Heart left ventricle (tissue), 16 donors: ENCODE measurements at regions of chr17 and their contacts with region 1.

Region 1: GRCh38 chr17:9361188-9361955 is 214.2 kb downstream of the STX8 start:
- DNase-seq: no peak
- ATAC-seq: peak in 3 of 4 donors; percentile 67 to 84 (median 83)
- H3K4me3 ChIP-seq: peak overlapping the region in 1 of 12 donors; percentile 13
- H3K27ac ChIP-seq: peak overlapping the region in 3 of 12 donors; percentile 39 to 52 (median 42)
- H3K4me1 ChIP-seq: peaks cover 0 to 28% (median 9%) of the 10 kb centered on the region in 12 donors
- H3K27me3 ChIP-seq: no peaks in the 10 kb centered on the region
- CTCF ChIP-seq: no peak
- POLR2A ChIP-seq: no peak

Region 2: DNA sequence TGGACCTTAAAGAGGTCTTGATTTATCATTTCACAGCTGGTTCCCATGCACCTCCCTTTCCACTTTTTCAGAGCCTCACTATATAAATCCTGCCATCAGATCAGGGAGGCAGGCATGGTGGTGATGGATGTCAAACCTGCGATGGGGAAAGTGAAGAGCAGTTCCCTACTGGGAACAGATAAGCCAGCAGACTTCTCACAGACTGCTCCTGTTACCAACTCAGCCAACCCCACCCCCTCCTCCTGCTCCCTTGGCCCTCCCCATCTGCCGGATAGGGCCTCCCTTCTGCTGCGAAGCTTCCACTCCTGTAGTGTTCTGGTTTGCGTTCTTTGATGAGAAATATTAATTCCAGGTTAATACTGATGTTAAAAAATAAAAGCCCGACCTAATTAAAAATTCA is 17.9 kb before region 1 on chr17:
- intact Hi-C with region 1: loop called in 1 of 10 experiments (anchors 2 kb)
- DNase-seq: no peak
- ATAC-seq: peak in 2 of 4 donors; percentile 58 to 79
- H3K4me3 ChIP-seq: no peak overlapping the region
- H3K27ac ChIP-seq: no peak overlapping the region
- H3K4me1 ChIP-seq: peaks cover 0 to 5% (median 0%) of the 10 kb centered on the region in 12 donors
- H3K27me3 ChIP-seq: no peaks in the 10 kb centered on the region
- CTCF ChIP-seq: no peak
- POLR2A ChIP-seq: no peak